ENCODE measurements at regions of chr17 and their contacts with region 1.

Region 1: DNA sequence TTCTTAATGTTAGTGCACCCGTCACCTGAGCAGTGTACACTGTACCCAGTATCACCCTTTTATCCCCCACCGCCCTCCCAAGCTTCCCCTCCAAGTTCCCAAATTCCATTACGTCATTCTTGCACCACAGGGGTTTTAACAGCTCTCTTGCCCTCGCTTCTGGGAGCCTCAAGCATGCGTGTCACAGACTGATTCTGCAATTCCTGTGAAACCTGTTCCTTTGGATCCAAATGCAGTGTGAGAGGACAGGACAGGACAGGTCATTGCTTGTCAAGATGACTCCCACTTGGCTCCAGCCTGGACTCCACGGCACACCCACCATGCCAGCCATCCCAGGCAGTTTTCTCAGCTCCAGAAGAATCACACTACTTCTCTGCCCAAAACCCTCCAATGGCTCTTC is 44.1 kb downstream of the CYB5D2 start:
- DNase-seq: no peak
- ATAC-seq: peak in 2 of 4 donors; percentile 33 to 63
- H3K4me3 ChIP-seq: no peak overlapping the region
- H3K27ac ChIP-seq: no peak overlapping the region
- H3K4me1 ChIP-seq: no peaks in the 10 kb centered on the region
- H3K27me3 ChIP-seq: no peaks in the 10 kb centered on the region
- CTCF ChIP-seq: no peak

Region 2: DNA sequence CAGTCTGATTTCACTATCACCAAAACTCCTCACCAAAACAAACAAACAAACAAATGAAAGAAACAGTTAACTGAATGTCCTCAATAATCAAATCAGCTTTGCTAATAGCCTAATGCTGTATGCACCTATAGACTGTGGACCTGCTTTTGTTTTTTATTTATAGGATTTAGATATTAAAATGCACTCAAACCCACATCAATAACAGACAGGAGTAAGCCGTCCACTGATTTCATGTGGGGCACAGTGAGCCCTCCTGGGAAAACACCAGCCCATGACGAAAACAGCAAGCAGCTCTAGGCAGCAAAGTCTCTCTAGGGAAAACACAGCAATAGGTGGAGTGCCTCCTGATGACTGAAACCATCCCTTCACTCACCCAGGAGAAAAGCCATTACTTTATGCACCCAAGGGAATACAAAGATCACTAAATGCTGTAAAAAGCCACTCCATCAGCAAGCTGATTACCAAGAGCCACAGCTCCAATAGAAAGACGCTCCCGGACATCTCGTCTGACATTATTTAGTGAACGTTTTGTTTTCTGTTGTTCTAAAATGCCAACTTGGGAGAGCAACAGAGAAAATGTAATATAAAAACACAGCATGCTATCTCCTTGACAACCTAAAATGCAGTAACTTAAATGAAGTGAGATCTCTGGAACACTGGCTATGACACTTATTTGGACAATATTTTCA is 28.9 kb after region 1 on chr17:
- intact Hi-C with region 1: no loop called
- DNase-seq: no peak
- ATAC-seq: peak in 2 of 4 donors; percentile 19 to 43
- H3K4me3 ChIP-seq: peak overlapping the region; percentile 47
- H3K27ac ChIP-seq: peak overlapping the region; percentile 89
- H3K4me1 ChIP-seq: peaks cover 30% of the 10 kb centered on the region
- H3K27me3 ChIP-seq: no peaks in the 10 kb centered on the region
- CTCF ChIP-seq: no peak

Region 3: GRCh38 chr17:4229627-4230541 is 42.8 kb after region 1 on chr17:
- intact Hi-C with region 1: no loop called
- DNase-seq: peak; percentile 74 to 84
- ATAC-seq: peak; percentile 85 to 88 (median 87)
- H3K4me3 ChIP-seq: peak overlapping the region; percentile 22
- H3K27ac ChIP-seq: peak overlapping the region; percentile 84
- H3K4me1 ChIP-seq: peaks cover 61% of the 10 kb centered on the region
- H3K27me3 ChIP-seq: no peaks in the 10 kb centered on the region
- CTCF ChIP-seq: no peak

Region 4: GRCh38 chr17:4354862-4355514 is 167.9 kb after region 1 on chr17:
- intact Hi-C with region 1: no loop called
- DNase-seq: no peak
- ATAC-seq: no peak
- H3K4me3 ChIP-seq: no peak overlapping the region
- H3K27ac ChIP-seq: peak overlapping the region; percentile 59
- H3K4me1 ChIP-seq: peaks cover 76% of the 10 kb centered on the region
- H3K27me3 ChIP-seq: no peaks in the 10 kb centered on the region
- CTCF ChIP-seq: no peak

Region 5: GRCh38 chr17:4366327-4367063 is 179.4 kb after region 1 on chr17 and contains the start of gene UBE2G1:
- intact Hi-C with region 1: no loop called
- DNase-seq: peak; percentile 99
- ATAC-seq: peak; percentile 82 to 90 (median 84)
- H3K4me3 ChIP-seq: peak within 1 kb of the TSS; percentile 100
- H3K27ac ChIP-seq: peak within 1 kb of the TSS; percentile 99
- H3K4me1 ChIP-seq: peaks cover 17% of the 10 kb centered on the region
- H3K27me3 ChIP-seq: no peaks in the 10 kb centered on the region
- CTCF ChIP-seq: peak; percentile 26
- total RNA-seq, gene UBE2G1: 152 to 239 (median 175) TPM

Region 6: GRCh38 chr17:4520894-4521600 is 334.0 kb after region 1 on chr17:
- intact Hi-C with region 1: loop called in 1 of 2 experiments (anchors 10 kb)
- DNase-seq: no peak
- ATAC-seq: peak in 1 of 4 donors; percentile 46
- H3K4me3 ChIP-seq: no peak overlapping the region
- H3K27ac ChIP-seq: peak overlapping the region; percentile 63
- H3K4me1 ChIP-seq: no peaks in the 10 kb centered on the region
- H3K27me3 ChIP-seq: no peaks in the 10 kb centered on the region
- CTCF ChIP-seq: no peak